ENCODE measurements at regions of chr3 and their contacts with region 1.

Region 1: DNA sequence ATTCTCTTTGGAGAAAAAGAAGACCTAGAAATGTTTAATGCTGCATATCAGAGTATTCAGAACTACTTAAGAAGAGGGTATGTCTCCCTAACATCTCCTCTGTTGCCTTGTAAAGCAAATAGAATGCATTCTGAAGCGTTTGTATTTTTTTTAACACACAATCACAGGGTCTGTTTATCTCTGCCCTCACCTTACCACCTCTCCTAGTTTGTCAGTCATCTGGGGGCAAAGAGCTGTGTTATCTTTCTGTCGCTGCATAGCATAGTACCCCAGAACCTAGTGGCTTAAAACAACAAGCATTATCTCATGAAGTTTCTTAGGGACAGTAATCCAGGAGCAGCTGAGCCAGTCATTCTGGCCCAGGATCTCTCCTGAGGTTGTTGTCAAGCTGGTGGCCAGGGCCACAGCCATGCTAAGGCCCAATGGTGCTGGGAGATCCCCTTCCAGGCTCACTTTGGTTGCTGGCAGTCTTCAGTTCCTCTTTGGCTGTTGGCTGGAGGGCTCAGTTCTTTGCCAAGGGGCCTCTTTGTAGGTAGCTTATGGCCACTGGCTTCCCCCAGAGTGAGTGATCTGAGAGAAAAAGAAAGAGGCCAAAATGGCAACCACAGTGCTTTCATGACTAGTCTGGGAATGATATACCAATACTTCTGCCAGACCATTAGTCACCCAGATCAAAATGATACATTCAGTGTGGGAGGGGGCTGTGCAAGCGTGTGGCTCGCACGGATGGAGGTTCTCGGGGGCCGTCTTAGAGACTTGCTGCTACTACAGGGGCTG is 17.8 kb downstream of the EDEM1 start:
- DNase-seq: peak; percentile 41
- ATAC-seq: peak; percentile 98
- H3K4me3 Mint-ChIP-seq: peak overlapping the region; percentile 37
- H3K27ac Mint-ChIP-seq: peak overlapping the region; percentile 86
- H3K4me1 Mint-ChIP-seq: peaks cover 42% of the 10 kb centered on the region
- H3K27me3 Mint-ChIP-seq: no peaks in the 10 kb centered on the region
- CTCF ChIP-seq: no peak

Region 2: DNA sequence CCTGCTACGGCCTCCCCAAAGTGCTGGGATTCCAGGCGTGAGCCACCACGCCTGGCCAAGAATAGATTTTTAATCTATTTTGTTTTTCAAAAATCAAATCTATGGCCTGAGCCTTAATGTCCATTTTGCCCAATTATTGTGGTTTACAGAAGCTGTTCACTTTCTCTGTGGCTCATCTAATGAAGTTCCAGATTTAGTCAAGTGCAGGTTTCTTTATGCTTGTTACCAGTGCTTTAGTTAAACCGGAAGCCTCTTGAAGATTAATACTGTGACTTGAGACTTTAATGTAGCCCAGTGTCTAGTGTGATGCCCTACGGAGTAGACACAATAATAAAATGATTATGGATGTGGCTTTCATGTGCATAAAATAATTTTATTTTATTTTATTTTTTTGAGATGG is 34.4 kb before region 1 on chr3:
- CTCF ChIA-PET with region 1: no interaction called
- POLR2A ChIA-PET with region 1: no interaction called
- intact Hi-C with region 1: loop called (anchors 5 kb)
- DNase-seq: no peak
- ATAC-seq: no peak
- H3K4me3 Mint-ChIP-seq: no peak overlapping the region
- H3K27ac Mint-ChIP-seq: no peak overlapping the region
- H3K4me1 Mint-ChIP-seq: peaks cover 25% of the 10 kb centered on the region
- H3K27me3 Mint-ChIP-seq: no peaks in the 10 kb centered on the region
- CTCF ChIP-seq: no peak

Region 3: GRCh38 chr3:5181469-5182141 is 23.7 kb before region 1 on chr3:
- CTCF ChIA-PET with region 1: no interaction called
- POLR2A ChIA-PET with region 1: interaction called, 37 read pairs
- intact Hi-C with region 1: loop called (anchors 1 kb)
- DNase-seq: no peak
- ATAC-seq: peak; percentile 80
- H3K4me3 Mint-ChIP-seq: peak overlapping the region; percentile 62
- H3K27ac Mint-ChIP-seq: peak overlapping the region; percentile 90
- H3K4me1 Mint-ChIP-seq: peaks cover 96% of the 10 kb centered on the region
- H3K27me3 Mint-ChIP-seq: no peaks in the 10 kb centered on the region
- CTCF ChIP-seq: no peak

Region 4: DNA sequence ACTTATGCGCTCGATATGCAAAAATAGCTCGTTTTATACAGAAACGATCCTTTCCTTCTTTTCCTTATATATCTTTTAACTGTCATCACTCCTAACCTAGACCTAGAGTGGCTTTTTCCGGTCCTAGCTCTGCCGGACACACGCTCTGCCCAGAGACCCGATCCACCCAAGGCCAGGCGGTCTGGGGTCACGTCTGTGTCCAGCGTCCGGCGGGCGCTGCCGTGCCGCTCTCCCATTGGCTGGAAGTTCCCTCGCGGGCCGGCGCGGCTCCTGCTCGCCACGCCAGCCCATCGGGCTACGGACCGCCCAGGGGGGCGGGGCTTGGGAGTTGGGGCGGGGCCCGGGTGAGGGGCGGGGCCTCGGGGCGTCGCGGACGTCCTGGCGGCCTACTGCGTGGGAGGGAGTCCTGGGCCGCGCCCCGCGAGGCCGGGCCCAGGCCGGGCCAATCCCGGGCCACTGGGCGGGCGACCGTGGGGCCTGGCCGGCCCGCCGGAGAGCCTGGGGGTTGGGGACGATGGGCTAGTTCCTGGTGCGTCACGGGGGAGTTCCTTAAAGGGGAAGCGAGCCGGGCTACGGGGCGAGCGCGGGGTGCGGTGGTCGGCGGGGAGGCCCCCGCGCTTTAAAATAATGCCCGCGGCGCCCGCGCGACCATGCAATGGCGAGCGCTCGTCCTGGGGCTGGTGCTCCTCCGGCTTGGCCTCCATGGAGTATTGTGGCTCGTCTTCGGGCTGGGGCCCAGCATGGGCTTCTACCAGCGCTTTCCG is 18.0 kb before region 1 on chr3 and contains the start of gene EDEM1:
- CTCF ChIA-PET with region 1: interaction called, 3 read pairs
- POLR2A ChIA-PET with region 1: interaction called, 37 read pairs
- intact Hi-C with region 1: loop called (anchors 1 kb)
- DNase-seq: peak; percentile 100
- ATAC-seq: peak; percentile 88
- H3K4me3 Mint-ChIP-seq: peak within 1 kb of the TSS; percentile 98
- H3K27ac Mint-ChIP-seq: peak within 1 kb of the TSS; percentile 99
- H3K4me1 Mint-ChIP-seq: peaks cover 73% of the 10 kb centered on the region
- H3K27me3 Mint-ChIP-seq: no peaks in the 10 kb centered on the region
- CTCF ChIP-seq: no peak
- total RNA-seq, gene EDEM1: 171 and 185 TPM in 2 replicates

Region 5: DNA sequence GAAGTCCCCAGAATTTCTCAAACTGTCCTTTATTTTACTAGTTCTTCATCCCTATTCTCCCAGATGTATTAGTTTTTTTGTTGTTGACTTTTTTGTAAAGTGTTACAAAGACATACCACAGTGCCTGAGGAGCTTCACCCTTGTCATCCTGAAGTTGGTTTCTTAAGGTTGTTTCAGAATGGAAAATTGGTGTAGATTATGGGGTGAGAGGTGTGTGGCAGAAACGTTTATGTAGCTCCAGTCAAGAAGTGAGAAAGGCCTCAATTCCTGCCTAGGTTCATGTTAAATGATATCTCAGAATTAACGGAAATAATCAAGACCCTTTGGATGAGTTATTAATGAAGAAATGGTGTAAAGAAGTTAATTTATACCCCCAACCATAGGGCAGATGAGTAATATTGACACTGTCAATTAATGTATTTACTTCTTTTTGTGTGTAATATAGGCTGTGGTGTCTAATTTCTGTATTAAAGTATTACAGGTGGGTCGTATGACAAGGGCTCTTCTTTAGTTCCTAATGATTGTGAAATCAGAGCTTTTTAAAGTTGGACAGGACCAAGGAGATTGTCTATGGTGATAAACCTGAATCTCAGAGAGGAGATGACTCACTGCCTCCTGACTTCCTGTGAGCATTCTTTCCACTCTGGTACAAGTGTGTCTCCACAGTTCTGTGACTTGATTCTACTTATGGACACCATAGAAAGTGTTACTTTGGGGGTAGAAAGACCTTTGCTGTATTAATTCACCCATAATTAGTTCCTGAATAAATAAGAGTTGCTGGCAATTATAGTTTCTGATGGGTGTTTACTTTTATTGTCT is 10.8 kb before region 1 on chr3:
- CTCF ChIA-PET with region 1: interaction called, 6 read pairs
- POLR2A ChIA-PET with region 1: interaction called, 37 read pairs
- intact Hi-C with region 1: loop called (anchors 1 kb)
- DNase-seq: no peak
- ATAC-seq: peak; percentile 55
- H3K4me3 Mint-ChIP-seq: peak overlapping the region; percentile 62
- H3K27ac Mint-ChIP-seq: peak overlapping the region; percentile 89
- H3K4me1 Mint-ChIP-seq: peaks cover 94% of the 10 kb centered on the region
- H3K27me3 Mint-ChIP-seq: no peaks in the 10 kb centered on the region
- CTCF ChIP-seq: no peak